HCT116 (cell line): ENCODE measurements at regions of chr13 and their contacts with region 1.

Region 1: GRCh38 chr13:99980201-99980823 is 1.3 kb upstream of the ZIC2 start:
- DNase-seq: peak; percentile 52
- ATAC-seq: peak; percentile 72
- H3K4me3 ChIP-seq: peak overlapping the region; percentile 85 to 96
- H3K27ac ChIP-seq: peak overlapping the region; percentile 100
- H3K4me1 ChIP-seq: peaks cover 15 to 28% of the 10 kb centered on the region in 2 experiments
- H3K27me3 ChIP-seq: no peaks in the 10 kb centered on the region
- CTCF ChIP-seq: no peak
- POLR2A ChIP-seq: peak; percentile 31
- RAD21 ChIP-seq: no peak

Region 2: DNA sequence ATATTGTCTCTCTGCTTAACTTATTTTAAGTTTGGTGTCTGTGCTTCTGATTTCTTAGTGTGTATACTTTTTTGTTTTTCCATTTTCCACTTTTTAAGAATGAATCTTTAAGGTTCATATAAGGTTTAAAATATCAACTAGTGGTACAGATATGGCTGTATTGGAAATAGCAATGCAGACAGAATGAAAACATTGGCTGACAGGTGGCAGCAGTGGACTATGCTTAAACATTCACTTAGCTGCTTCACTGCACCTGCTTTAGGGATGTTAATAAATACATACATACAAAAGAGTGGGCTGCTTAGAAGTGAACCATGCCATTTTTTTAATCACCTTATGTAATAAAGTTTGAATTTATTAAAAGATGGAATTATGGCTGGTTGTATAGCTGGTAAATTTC is 451.8 kb before region 1 on chr13:
- CTCF ChIA-PET with region 1: no interaction called
- POLR2A ChIA-PET with region 1: no interaction called
- RAD21 ChIA-PET with region 1: no interaction called
- intact Hi-C with region 1: no loop called
- DNase-seq: no peak
- ATAC-seq: peak; percentile 70
- H3K4me3 ChIP-seq: no peak overlapping the region
- H3K27ac ChIP-seq: no peak overlapping the region
- H3K4me1 ChIP-seq: no peaks in the 10 kb centered on the region
- H3K27me3 ChIP-seq: no peaks in the 10 kb centered on the region
- CTCF ChIP-seq: peak in 2 of 3 experiments; percentile 16 to 29; a peak in 2 of 6 replicates
- POLR2A ChIP-seq: no peak
- RAD21 ChIP-seq: peak; percentile 35; the same call in 1 of the 2 replicates

Region 3: GRCh38 chr13:99935777-99936176 is 44.5 kb before region 1 on chr13:
- CTCF ChIA-PET with region 1: no interaction called
- POLR2A ChIA-PET with region 1: no interaction called
- RAD21 ChIA-PET with region 1: interaction called, 5 to 13 read pairs
- intact Hi-C with region 1: no loop called
- DNase-seq: no peak
- ATAC-seq: peak; percentile 42
- H3K4me3 ChIP-seq: no peak overlapping the region
- H3K27ac ChIP-seq: no peak overlapping the region
- H3K4me1 ChIP-seq: no peaks in the 10 kb centered on the region
- H3K27me3 ChIP-seq: no peaks in the 10 kb centered on the region
- CTCF ChIP-seq: peak in 2 of 3 experiments; percentile 11 to 12; a peak in 1 of 6 replicates
- POLR2A ChIP-seq: no peak
- RAD21 ChIP-seq: no peak

Region 4: DNA sequence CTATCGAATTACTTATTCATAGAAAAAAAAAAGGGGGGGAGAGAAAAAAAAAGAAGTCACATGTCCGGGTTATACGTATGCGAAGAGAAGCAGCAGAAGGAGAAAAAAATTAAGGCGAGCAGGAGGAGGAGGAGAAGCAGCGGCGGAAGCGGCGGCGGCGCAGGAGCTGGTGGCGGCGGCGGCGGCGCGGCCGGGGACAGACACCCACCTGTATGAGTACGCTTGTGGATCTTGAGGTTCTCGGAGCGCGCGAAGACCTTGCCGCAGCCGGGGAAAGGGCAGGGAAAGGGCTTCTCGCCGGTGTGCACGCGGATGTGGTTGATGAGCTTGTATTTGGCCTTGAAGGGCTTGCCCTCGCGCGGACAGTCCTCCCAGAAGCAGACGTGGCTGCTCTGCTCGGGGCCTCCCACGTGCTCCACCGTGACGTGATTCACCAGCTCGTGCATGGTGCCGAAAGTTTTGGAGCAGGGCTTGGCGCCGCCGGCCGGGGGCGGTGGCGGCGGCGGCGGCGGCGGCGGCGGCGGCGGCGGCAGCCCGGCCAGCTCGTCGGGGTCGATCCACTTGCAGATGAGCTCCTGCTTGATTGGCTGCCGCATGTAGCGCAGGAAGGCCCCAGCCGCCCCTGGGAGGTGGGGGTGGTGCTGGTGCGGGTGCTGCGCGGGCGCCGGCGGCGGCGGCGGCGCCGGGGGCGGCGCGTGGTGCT is 10.2 kb before region 1 on chr13:
- CTCF ChIA-PET with region 1: interaction called, 3 read pairs
- POLR2A ChIA-PET with region 1: interaction called, 21 read pairs
- RAD21 ChIA-PET with region 1: no interaction called
- intact Hi-C with region 1: no loop called
- DNase-seq: peak; percentile 66
- ATAC-seq: peak; percentile 78
- H3K4me3 ChIP-seq: peak overlapping the region; percentile 79 to 82
- H3K27ac ChIP-seq: peak overlapping the region; percentile 97
- H3K4me1 ChIP-seq: peaks cover 10 to 33% of the 10 kb centered on the region in 2 experiments
- H3K27me3 ChIP-seq: no peaks in the 10 kb centered on the region
- CTCF ChIP-seq: no peak
- POLR2A ChIP-seq: peak; percentile 12
- RAD21 ChIP-seq: no peak

Region 5: GRCh38 chr13:100129605-100130004 is 149.3 kb after region 1 on chr13:
- CTCF ChIA-PET with region 1: no interaction called
- POLR2A ChIA-PET with region 1: no interaction called
- RAD21 ChIA-PET with region 1: no interaction called
- intact Hi-C with region 1: no loop called
- DNase-seq: no peak
- ATAC-seq: no peak
- H3K4me3 ChIP-seq: no peak overlapping the region
- H3K27ac ChIP-seq: no peak overlapping the region
- H3K4me1 ChIP-seq: peaks cover 3 to 10% of the 10 kb centered on the region in 2 experiments; a peak in 2 of 4 replicates
- H3K27me3 ChIP-seq: no peaks in the 10 kb centered on the region
- CTCF ChIP-seq: no peak
- POLR2A ChIP-seq: no peak
- RAD21 ChIP-seq: no peak